HAP-1 (cell line): ENCODE measurements at regions of chr2 and their contacts with region 1.

Region 1: DNA sequence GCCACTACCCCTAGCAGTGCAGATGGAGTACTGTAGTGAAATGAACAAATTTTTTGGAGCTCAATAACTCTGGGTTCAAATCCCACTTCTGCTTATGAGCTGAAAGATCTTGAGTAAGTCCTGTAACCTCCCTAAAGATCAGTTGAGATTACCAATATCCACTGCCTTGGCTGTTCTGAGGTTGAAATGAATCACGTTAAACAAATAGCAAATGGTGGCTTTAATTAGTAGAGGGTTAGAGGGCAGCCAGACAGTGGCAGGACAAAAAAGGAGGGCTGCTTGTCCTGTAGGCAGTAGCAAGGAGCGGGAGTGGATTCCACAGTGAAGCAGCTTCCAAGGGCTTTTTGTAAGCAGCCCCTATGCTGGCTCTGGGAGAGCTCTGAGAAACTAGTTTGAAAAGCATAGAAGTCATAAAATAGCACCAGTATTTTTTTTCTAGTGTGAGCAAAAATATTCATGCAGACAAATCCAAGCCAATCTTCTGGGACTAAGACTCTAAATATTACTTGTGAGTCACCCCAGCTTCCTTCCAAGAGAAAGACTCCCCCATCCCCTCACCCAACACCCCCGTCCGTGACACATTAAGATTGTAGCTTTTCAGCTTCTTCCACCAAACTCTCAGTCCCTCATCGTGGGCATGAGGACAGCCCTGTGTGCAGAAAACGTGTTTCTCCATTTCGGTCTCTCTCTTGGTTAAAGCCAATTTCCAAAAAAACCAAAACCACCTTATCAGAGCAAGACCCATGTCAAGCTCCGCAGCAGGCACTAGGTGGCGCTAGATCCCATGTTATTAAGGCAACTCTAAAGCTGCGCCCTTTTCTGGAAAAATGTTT is 123.5 kb upstream of the LGALSL start:
- DNase-seq: peak; percentile 83 to 91
- H3K4me3 ChIP-seq: no peak overlapping the region
- H3K4me1 ChIP-seq: peaks cover 12% of the 10 kb centered on the region
- H3K27me3 ChIP-seq: no peaks in the 10 kb centered on the region

Region 2: DNA sequence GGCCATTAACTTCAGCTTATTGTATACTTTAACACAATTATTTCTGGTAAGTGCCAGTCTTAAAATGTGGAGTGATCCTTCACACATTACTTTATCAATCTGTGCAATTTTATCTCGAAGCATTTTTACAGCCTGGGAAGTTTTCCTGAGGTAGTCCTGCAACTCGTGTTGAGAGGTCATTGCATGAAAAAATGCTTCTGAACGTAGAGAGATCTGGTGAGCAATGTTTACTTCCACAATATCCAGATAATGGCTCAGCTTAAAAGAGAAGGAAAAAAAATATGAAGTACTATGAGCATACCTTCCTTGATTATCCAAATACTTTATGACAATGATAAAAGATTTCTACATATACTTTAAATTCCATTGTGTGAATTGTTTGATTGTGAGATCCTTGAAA is 368.3 kb before region 1 on chr2:
- in situ Hi-C with region 1: no loop called
- DNase-seq: no peak
- H3K4me3 ChIP-seq: no peak overlapping the region
- H3K4me1 ChIP-seq: no peaks in the 10 kb centered on the region
- H3K27me3 ChIP-seq: no peaks in the 10 kb centered on the region

Region 3: DNA sequence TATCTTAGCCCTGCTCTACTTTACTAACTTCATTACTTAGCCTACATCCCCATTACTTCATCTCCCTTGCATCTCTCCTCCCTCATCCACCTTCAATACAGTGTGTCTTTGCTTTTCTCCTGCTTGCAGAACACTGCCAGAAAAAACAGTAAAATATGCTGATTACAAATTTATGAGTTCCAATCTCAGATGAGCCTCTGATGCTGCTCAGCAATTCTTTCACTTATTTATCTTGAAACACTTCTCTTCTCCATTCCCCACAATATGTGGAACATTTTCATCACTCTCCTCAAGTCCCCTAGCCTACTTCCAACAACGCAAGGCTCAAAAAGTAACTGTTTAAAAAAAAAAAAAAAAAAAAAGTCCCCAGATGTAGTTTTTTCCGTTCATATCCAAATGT is 318.4 kb before region 1 on chr2:
- in situ Hi-C with region 1: no loop called
- DNase-seq: no peak
- H3K4me3 ChIP-seq: no peak overlapping the region
- H3K4me1 ChIP-seq: no peaks in the 10 kb centered on the region
- H3K27me3 ChIP-seq: no peaks in the 10 kb centered on the region

Region 4: GRCh38 chr2:64045938-64046337 is 284.6 kb before region 1 on chr2:
- in situ Hi-C with region 1: loop called (anchors 5 kb)
- DNase-seq: no peak
- H3K4me3 ChIP-seq: no peak overlapping the region
- H3K4me1 ChIP-seq: peaks cover 2% of the 10 kb centered on the region; the same call in 1 of the 2 replicates
- H3K27me3 ChIP-seq: no peaks in the 10 kb centered on the region

Region 5: DNA sequence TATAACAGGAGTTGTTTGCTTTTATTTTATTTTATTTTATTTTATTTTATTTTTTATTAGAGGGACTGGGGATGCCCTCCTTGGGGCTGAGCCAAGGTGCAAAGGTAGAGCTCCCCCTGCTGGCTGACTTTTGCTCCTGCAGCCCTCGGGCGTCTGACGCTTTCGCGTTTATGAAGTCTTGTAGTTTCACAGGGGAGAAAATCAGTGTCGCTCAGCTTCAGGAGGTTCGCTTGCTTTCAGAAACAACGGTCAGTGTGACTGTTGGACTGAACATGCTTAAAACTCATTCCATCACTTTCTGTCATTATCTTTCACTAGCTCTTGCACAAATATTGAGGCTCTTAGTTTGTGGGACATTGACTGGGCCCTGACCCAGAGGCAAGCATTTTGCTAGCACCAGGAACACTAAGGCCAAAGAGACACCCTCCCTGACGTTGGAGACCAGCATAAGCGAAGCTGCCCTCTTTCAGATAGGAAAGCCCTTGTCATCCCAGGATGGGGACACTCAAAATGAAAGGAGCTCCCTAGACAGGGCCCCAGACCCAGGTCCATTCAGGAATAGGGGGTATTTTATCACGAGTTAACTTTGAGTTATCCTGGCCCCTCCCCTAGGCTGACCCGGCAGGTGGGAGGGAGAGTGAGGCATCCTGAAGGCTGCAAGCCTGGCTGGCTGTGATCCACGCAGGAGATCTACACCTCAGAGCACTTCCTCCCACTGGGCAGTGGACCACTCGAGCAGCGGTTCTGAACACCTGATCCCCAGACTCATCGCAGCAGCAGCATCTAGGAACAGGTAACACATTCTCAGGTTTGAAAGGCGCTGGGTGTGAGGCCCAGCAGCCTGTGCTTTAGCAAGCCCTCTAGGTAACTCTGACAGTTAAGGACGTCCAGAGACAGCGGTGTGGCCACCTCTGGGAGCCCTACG is 157.8 kb after region 1 on chr2:
- in situ Hi-C with region 1: loop called (anchors 5 kb)
- DNase-seq: peak; percentile 66 to 89
- H3K4me3 ChIP-seq: no peak overlapping the region
- H3K4me1 ChIP-seq: peaks cover 7% of the 10 kb centered on the region
- H3K27me3 ChIP-seq: no peaks in the 10 kb centered on the region

Region 6: DNA sequence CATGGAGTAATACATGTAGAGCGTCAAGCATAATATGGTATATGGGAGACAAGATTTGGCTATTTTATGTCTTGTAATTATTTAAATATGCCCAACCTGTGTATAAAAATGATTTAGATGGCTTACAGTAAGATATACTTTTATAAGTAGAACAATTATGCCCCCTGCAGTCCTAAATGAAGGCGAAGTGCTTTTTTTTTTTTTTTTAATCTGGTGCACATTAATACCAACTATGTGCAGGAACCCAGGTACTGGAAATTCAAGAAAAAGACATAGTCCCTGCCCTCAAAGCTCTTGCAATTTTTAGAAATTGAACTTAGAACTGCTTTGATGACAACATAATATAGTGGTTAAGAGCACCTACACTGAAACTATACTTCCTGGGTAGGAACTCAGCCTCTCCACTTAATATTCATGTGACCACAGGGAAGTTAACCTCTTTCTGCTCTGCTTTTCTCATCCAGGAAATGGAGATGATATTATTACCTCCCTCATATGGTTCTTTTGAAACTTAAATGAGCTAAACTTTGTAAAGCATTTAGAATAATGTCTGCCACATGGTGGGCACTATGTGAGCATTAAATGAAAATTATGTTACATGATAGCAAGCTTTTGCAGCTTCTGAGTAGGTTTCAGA is 231.8 kb after region 1 on chr2:
- in situ Hi-C with region 1: loop called (anchors 10 kb)
- DNase-seq: no peak
- H3K4me3 ChIP-seq: no peak overlapping the region
- H3K4me1 ChIP-seq: no peaks in the 10 kb centered on the region
- H3K27me3 ChIP-seq: no peaks in the 10 kb centered on the region

Region 7: GRCh38 chr2:64807417-64807816 is 476.9 kb after region 1 on chr2:
- in situ Hi-C with region 1: no loop called
- DNase-seq: no peak
- H3K4me3 ChIP-seq: no peak overlapping the region
- H3K4me1 ChIP-seq: no peaks in the 10 kb centered on the region
- H3K27me3 ChIP-seq: no peaks in the 10 kb centered on the region; the same call in 1 of the 2 replicates

Region 8: DNA sequence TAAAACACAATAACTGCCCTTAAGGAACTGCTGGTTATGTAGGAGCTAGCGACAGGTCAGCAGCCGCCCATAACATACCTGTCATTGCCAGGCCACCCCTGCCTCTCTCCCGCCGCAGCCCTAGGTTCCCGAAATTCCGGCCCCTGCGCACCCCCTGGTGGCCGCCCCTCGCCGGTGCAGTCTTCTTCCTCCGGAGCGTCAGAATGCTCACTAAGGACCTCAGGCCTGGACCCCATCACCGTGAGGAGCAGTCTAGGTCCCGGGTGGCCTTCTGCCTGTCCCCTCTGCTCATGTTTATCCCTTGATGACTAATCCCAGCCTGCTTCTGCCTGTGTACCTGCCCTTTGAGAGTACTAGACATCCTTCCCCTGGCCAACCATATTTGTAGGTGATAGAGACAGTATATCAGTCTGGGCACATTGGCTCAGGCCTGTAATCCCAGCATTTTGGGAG is 543.0 kb after region 1 on chr2:
- in situ Hi-C with region 1: loop called (anchors 5 kb)
- DNase-seq: peak; percentile 55 to 90
- H3K4me3 ChIP-seq: no peak overlapping the region
- H3K4me1 ChIP-seq: peaks cover 5% of the 10 kb centered on the region; the same call in 1 of the 2 replicates
- H3K27me3 ChIP-seq: no peaks in the 10 kb centered on the region

Region 9: GRCh38 chr2:65443509-65444201 is 1113.2 kb after region 1 on chr2:
- in situ Hi-C with region 1: no loop called
- DNase-seq: no peak
- H3K4me3 ChIP-seq: no peak overlapping the region
- H3K4me1 ChIP-seq: peaks cover under 1% of the 10 kb centered on the region
- H3K27me3 ChIP-seq: no peaks in the 10 kb centered on the region